ENCODE measurements at regions of chr18 and their contacts with region 1.

Region 1: DNA sequence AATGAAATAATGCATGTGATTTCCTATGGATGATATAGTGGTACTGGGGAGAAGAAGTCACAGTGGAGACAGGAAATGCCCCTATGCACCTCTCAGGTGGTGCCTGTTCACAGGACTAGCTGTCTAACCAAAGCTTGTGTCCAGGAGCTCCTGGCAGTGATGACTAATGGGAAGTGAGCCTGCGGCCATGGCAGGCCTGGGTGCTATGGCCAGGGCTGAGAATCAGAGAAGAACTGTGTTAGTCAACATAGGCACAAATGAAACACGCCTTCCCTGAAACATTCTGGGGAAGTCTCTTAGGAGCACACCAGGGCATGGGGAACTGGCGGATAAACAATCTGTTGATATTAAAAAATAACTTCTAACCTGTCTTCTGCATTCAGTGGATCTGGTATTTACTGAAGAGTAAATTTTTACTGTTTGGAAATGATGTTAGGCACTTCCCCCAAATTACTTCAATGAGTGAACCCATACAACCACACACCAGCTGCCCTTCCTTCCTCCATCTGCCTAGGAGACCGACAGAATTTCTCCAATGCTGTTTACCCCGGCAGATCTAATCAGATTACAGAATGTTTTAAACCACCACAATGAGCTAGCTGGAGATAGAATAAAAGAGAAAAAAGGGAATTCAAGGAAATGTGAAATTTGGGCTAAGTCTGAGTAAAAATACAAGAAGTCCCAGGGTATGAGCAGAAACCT is 67.4 kb downstream of the MEP1B start:
- DNase-seq: no peak
- H3K4me3 ChIP-seq: no peak overlapping the region
- H3K27ac ChIP-seq: no peak overlapping the region
- H3K4me1 ChIP-seq: no peaks in the 10 kb centered on the region
- H3K27me3 ChIP-seq: no peaks in the 10 kb centered on the region
- CTCF ChIP-seq: no peak
- POLR2A ChIP-seq: no peak

Region 2: DNA sequence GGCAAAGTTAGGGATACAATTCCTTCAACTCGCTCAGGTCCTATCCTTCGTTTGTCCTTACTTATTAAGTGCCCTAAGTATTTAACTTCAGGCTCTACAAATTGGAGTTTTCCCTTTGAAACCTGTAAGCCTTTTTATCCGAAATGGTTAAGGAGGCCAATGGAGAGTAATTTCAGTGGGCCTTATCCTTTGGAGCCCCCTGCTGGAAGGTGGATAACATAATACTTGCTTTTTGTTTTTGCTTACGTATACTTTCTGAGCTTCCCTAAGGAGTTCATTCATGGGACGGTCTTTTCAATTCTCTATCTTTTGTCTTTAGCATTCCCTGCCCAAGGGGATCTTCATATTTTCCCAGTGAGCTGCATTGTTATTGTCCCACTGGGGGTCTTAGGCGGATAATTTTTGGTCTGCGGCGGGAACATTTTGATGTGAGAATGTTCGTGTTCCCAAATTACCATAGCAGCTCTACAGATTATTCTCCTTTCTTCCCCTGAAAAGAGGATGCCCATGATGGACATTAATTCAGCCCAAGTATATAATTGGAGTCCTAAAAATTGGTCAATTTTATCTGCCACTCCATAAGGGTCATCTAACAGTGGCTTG is 279.9 kb before region 1 on chr18:
- intact Hi-C with region 1: no loop called
- DNase-seq: no peak
- H3K4me3 ChIP-seq: no peak overlapping the region
- H3K27ac ChIP-seq: no peak overlapping the region
- H3K4me1 ChIP-seq: no peaks in the 10 kb centered on the region
- H3K27me3 ChIP-seq: no peaks in the 10 kb centered on the region
- CTCF ChIP-seq: peak in 1 of 3 experiments; percentile 42
- POLR2A ChIP-seq: no peak

Region 3: DNA sequence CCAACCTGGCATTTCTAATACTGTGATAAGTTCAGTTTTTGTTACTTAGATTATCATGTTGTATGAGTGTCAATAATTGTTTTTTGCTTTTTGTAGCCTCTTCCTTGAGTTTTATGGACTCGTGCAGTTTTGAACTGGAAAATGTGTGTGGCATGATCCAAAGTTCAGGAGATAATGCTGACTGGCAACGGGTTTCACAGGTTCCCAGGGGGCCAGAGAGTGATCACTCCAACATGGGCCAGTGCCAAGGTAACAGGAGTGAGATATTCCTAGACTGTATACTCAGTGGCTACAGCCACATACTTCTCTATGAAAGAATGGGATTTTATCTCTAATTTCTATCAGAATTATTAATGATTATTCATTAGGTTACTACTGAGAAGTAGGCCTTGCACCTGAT is 49.2 kb before region 1 on chr18:
- intact Hi-C with region 1: loop called (anchors 2 kb)
- DNase-seq: no peak
- H3K4me3 ChIP-seq: no peak overlapping the region
- H3K27ac ChIP-seq: no peak overlapping the region
- H3K4me1 ChIP-seq: no peaks in the 10 kb centered on the region
- H3K27me3 ChIP-seq: no peaks in the 10 kb centered on the region
- CTCF ChIP-seq: no peak
- POLR2A ChIP-seq: no peak

Region 4: GRCh38 chr18:32919799-32920198 is 662.6 kb after region 1 on chr18:
- intact Hi-C with region 1: loop called (anchors 10 kb)
- DNase-seq: no peak
- H3K4me3 ChIP-seq: no peak overlapping the region
- H3K27ac ChIP-seq: no peak overlapping the region
- H3K4me1 ChIP-seq: no peaks in the 10 kb centered on the region
- H3K27me3 ChIP-seq: no peaks in the 10 kb centered on the region
- CTCF ChIP-seq: no peak
- POLR2A ChIP-seq: no peak